ENCODE measurements at regions of chr17 and their contacts with region 1.

Region 1: DNA sequence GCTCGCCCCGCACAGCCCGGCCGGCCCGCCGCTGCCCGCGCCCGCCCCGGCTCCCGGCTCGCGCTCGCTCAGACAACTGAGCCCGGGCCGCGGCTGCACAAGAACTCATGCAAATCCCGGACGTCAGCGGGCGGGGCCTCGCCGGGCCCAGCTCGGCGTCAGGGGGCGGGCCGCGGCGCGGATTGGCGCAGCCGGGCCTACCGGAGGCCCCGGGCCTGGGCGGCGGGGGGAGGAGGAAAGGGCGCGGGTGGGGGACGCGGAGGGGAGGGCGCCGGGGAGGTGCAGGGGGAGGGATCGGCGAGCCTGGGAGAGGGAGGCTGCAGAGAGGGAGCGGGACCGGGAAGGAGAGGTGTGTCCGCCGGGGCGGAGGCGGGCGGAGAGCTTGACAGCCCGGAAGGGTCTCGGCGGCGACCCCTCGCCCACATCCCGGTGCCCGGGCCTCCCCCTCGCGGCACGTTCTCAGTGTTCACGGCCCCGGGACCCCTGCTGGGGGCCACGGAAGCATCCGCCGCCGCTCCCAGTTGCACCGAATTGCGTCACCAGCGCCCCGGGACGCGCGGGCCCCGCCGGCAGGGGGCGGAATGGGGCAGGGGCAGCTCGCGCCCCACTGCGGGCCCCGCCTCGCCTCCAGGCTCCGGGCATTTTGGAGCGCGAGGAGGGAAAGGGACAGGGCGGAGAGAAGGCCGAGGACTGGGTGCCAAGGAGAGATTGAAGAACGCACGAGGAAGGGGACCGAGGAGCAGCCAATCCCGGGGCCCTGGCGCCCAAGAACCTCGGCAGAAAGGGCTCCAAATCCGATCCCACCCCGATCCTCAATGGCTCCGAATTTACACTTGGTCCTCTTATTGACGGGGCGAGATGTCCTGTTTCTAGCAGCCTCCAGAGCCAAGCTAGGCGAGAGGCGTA is at the start of gene CBX4:
- DNase-seq: peak; percentile 93
- ATAC-seq: peak; percentile 76
- H3K4me3 Mint-ChIP-seq: peak within 1 kb of the TSS; percentile 91
- H3K27ac Mint-ChIP-seq: peak within 1 kb of the TSS; percentile 92
- H3K4me1 Mint-ChIP-seq: peaks cover 46% of the 10 kb centered on the region
- H3K27me3 Mint-ChIP-seq: peaks cover 31% of the 10 kb centered on the region
- CTCF ChIP-seq: peak; percentile 82
- total RNA-seq, gene CBX4: 23.9 to 28.0 TPM

Region 2: GRCh38 chr17:79789534-79790353 is 49.9 kb before region 1 on chr17:
- CTCF ChIA-PET with region 1: interaction called, 14 read pairs
- POLR2A ChIA-PET with region 1: interaction called, 4 read pairs
- intact Hi-C with region 1: no loop called
- DNase-seq: no peak
- ATAC-seq: peak; percentile 57
- H3K4me3 Mint-ChIP-seq: no peak overlapping the region
- H3K27ac Mint-ChIP-seq: no peak overlapping the region
- H3K4me1 Mint-ChIP-seq: peaks cover 7% of the 10 kb centered on the region
- H3K27me3 Mint-ChIP-seq: peaks cover 44% of the 10 kb centered on the region
- CTCF ChIP-seq: peak; percentile 97

Region 3: GRCh38 chr17:79803997-79804855 is 35.4 kb before region 1 on chr17:
- CTCF ChIA-PET with region 1: interaction called, 48 read pairs
- POLR2A ChIA-PET with region 1: interaction called, 15 read pairs
- intact Hi-C with region 1: loop called (anchors 5 kb)
- DNase-seq: peak; percentile 95
- ATAC-seq: peak; percentile 78
- H3K4me3 Mint-ChIP-seq: peak overlapping the region; percentile 74
- H3K27ac Mint-ChIP-seq: peak overlapping the region; percentile 89
- H3K4me1 Mint-ChIP-seq: peaks cover 48% of the 10 kb centered on the region
- H3K27me3 Mint-ChIP-seq: peaks cover 74% of the 10 kb centered on the region
- CTCF ChIP-seq: no peak

Region 4: GRCh38 chr17:79826204-79826680 is 13.4 kb before region 1 on chr17:
- CTCF ChIA-PET with region 1: interaction called, 19 read pairs
- POLR2A ChIA-PET with region 1: interaction called, 5 read pairs
- intact Hi-C with region 1: no loop called
- DNase-seq: no peak
- ATAC-seq: no peak
- H3K4me3 Mint-ChIP-seq: no peak overlapping the region
- H3K27ac Mint-ChIP-seq: peak overlapping the region; percentile 58
- H3K4me1 Mint-ChIP-seq: peaks cover 8% of the 10 kb centered on the region
- H3K27me3 Mint-ChIP-seq: peaks cover 10% of the 10 kb centered on the region
- CTCF ChIP-seq: no peak

Region 5: GRCh38 chr17:79866791-79867518 is 27.3 kb after region 1 on chr17:
- CTCF ChIA-PET with region 1: no interaction called
- POLR2A ChIA-PET with region 1: no interaction called
- intact Hi-C with region 1: no loop called
- DNase-seq: no peak
- ATAC-seq: peak; percentile 61
- H3K4me3 Mint-ChIP-seq: no peak overlapping the region
- H3K27ac Mint-ChIP-seq: no peak overlapping the region
- H3K4me1 Mint-ChIP-seq: no peaks in the 10 kb centered on the region
- H3K27me3 Mint-ChIP-seq: peaks cover 7% of the 10 kb centered on the region
- CTCF ChIP-seq: no peak